Caco-2 (cell line): ENCODE measurements at regions of chr3 and their contacts with region 1.

Region 1: GRCh38 chr3:118593277-118593670 is 441.4 kb downstream of the IGSF11 start:
- DNase-seq: peak; percentile 62 to 80
- H3K4me3 ChIP-seq: no peak overlapping the region
- H3K4me3 Mint-ChIP-seq: no peak overlapping the region
- H3K27ac Mint-ChIP-seq: peak overlapping the region; percentile 64
- H3K4me1 ChIP-seq: peaks cover 35% of the 10 kb centered on the region
- H3K4me1 Mint-ChIP-seq: peaks cover 5% of the 10 kb centered on the region
- H3K27me3 ChIP-seq: no peaks in the 10 kb centered on the region
- H3K27me3 Mint-ChIP-seq: no peaks in the 10 kb centered on the region
- CTCF ChIP-seq: no peak

Region 2: GRCh38 chr3:118557513-118558257 is 35.6 kb before region 1 on chr3:
- CTCF ChIA-PET with region 1: no interaction called
- POLR2A ChIA-PET with region 1: no interaction called
- intact Hi-C with region 1: loop called (anchors 1 kb)
- DNase-seq: peak in 1 of 2 experiments; percentile 16
- H3K4me3 ChIP-seq: no peak overlapping the region
- H3K4me3 Mint-ChIP-seq: peak overlapping the region; percentile 0
- H3K27ac Mint-ChIP-seq: peak overlapping the region; percentile 4
- H3K4me1 ChIP-seq: peaks cover 21% of the 10 kb centered on the region
- H3K4me1 Mint-ChIP-seq: peaks cover 15% of the 10 kb centered on the region
- H3K27me3 ChIP-seq: no peaks in the 10 kb centered on the region
- H3K27me3 Mint-ChIP-seq: no peaks in the 10 kb centered on the region
- CTCF ChIP-seq: no peak